Activated CD4-positive, alpha-beta memory T cell treated with anti-CD3 and anti-CD28 coated beads for 36 hours (primary cell): ENCODE measurements at regions of chr13 and their contacts with region 1.

Region 1: GRCh38 chr13:101916108-101916757 is 463.8 kb downstream of the ITGBL1 start:
- DNase-seq: no peak
- H3K4me3 Mint-ChIP-seq: no peak overlapping the region
- H3K27ac Mint-ChIP-seq: no peak overlapping the region
- H3K4me1 Mint-ChIP-seq: no peaks in the 10 kb centered on the region
- H3K27me3 Mint-ChIP-seq: peaks cover 41% of the 10 kb centered on the region

Region 2: DNA sequence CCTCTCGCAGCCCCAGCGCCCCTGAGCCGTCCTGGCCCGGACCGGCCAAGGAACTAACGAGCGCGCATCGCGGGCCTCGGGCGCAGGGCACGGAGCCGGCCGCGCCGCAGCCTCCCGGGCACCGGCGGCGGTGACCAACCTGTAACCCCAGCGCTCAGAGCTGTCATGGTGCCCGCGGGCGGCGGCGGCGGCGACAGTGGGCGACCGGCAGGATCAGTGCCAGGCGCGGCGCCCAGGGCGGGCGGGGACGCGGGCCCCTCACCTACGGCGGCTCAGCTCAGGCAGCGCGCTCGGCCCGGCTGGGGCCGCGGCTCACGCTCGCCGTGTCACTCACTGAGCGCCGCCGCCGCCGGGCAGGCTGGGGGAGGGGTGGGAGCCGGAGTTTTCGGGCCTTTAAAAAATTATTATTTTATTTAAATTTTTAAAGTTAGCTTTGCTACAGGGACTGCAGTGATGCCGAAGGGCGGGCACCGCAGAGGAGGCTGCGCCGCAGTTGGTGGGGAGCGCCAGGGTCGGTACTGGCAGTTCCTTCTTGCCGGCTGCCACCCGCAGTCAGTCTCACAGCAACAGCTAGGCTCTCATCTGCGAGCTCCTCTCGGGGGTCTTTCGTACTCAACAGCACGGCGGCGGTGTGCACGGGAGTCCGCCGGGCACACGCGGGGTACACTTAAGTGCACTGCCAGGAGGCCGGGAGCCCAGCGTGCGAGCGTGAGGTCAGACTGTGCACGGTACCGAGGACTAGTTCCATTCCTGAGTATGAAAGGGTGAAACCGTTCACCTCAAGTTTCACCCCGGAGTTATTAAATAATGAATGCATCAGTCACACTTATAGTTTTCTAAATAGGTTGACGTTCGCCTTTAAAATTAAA is 499.8 kb before region 1 on chr13 and contains the start of gene NALCN:
- CTCF ChIA-PET with region 1: no interaction called
- POLR2A ChIA-PET with region 1: no interaction called
- intact Hi-C with region 1: loop called (anchors 5 kb)
- DNase-seq: peak; percentile 10
- H3K4me3 Mint-ChIP-seq: no peak within 1 kb of the TSS
- H3K27ac Mint-ChIP-seq: no peak within 1 kb of the TSS
- H3K4me1 Mint-ChIP-seq: peaks cover 2% of the 10 kb centered on the region
- H3K27me3 Mint-ChIP-seq: peaks cover 31% of the 10 kb centered on the region
- total RNA-seq, gene NALCN: not detected